ENCODE measurements at regions of chr14 and their contacts with region 1.

Region 1: DNA sequence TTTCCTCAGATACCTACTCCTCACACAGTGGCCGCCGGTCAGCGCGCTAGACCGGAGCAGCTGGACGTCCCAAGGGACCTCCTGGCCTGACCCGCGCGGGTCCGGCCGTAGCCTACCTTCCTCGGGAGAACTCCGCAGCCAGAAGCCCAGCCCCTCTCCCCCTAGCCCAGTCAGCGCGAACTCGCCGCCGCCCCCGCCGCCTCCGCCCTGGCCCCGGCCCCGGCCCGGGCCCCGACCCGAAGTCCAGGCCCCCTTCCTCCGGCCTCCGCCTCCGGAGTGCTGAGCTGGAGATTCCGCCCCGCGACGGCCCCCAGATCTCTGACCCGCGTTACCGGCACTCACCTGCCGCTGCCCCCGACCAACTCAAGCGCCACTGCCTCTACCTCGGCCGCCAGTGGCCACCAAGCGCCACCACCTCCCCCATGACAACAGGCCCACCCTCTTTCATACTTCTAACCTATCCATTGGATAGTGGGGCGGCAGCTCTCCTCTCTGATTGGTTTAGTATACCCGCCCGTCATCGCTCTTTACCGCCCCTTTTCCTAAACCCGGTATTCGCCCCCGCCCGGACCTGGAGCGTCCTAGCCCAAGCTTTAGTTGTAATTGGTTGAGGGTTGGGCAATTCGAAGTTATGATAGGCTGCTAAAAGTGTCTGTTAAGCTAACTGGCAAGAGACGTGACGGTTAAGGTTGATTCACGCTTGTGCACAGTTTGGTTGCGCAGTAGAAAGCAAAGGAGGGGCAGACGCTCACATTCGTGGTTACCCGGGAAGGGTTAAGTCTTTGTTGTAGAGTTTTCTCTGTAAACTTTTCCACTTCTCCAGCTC is at the start of gene NUMB:
- DNase-seq: peak; percentile 99

Region 2: DNA sequence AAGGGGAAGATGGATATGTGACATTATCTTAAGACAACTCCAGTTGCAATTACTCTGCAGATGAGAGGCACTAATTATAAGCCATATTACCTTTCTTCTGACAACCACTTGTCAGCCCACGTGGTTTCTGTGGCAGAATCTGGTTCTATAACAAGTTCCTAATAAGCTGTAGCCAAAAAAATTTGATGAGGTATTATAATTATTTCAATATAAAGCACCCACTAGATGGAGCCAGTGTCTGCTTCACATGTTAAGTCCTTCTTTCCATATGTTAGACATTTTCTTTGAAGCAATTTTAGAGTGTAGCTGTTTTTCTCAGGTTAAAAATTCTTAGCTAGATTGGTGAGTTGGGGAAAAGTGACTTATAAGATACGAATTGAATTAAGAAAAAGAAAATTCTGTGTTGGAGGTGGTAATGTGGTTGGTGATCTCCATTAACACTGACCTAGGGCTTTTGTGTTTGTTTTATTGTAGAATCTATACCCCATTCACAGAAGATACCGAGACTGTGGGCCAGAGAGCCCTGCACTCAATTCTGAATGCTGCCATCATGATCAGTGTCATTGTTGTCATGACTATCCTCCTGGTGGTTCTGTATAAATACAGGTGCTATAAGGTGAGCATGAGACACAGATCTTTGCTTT is 285.1 kb before region 1 on chr14:
- in situ Hi-C with region 1: loop called (anchors 25 kb)
- DNase-seq: peak; percentile 48

Region 3: DNA sequence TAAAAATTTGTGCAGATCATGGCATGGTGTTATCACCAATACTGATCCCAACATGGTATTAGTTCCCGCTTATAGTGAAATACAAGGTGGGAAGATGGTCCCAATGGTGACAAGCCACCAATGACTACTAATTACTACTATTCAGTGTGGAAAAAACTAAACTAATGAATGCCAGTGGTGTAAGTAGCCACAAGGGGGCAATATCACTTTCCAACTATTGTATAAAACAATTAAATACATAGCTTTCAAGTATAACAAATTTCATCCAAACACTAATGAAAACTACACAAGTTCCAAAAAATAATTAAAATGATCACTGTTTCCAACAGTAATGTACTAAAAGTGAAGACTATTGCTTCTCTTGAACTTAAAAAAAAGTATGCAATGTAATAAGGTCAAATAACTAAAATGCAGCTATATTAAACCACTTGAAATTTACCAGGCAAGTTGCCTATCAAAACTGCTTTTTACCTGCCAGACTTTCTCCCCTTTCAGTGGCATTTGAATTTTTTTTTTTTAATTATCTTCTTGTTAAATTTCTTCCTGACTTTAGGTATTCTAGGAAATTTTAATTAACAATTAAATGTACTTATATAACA is 163.1 kb before region 1 on chr14:
- in situ Hi-C with region 1: loop called (anchors 25 kb)
- DNase-seq: peak; percentile 57

Region 4: GRCh38 chr14:73728717-73729330 is 270.5 kb after region 1 on chr14:
- in situ Hi-C with region 1: no loop called
- DNase-seq: peak; percentile 65

Region 5: DNA sequence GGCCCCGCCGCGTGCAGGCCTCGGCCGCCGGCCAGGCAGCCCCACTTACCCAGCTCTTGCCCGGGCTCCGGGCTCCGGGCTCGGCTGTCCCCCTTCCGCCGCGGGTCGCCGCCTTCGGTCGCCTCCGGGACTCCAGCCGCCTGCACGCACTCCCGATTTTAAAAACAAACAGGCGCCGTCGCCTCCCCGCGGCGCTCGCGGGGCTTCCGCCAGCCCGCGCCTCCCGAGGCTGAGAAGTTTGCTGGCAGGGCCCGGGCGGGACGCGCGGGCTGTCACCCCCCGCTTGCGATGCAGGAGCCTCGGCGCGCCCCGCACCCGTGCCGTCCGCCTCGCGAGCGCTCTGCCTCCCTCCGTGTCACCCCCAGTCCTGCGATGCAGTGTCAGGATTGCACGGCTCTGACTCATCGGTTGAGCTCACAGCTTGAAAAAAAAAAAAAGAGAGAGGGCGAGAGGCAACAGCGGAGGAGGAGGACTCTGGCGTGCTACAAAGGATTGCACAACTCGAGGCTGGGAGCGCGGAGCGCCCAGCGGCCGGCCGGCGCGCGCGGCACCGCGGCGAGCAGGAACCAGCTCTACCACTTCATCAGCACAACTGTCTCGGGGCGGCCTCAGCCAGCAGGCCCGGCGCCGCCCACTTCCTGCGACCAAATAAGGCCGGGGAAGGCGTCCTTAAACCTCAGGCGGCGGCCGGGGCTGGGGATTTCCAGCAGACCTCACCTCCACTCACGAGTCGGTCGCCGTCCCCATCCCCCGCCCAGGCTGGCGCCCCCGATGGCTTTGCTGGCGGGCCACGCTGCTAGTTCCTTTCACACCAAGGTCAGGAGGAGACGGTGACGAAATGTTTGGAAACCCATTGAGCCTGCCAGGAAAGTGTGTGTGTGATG is 301.6 kb after region 1 on chr14:
- in situ Hi-C with region 1: no loop called
- DNase-seq: peak; percentile 92